SK-N-SH (cell line): ENCODE measurements at regions of chr12 and their contacts with region 1.

Region 1: GRCh38 chr12:43444940-43445564 is 107.0 kb downstream of the ADAMTS20 start:
- DNase-seq: peak; percentile 10
- H3K4me3 ChIP-seq: no peak overlapping the region
- H3K27ac ChIP-seq: no peak overlapping the region
- H3K4me1 ChIP-seq: no peaks in the 10 kb centered on the region; a peak in 1 of 4 replicates
- H3K27me3 ChIP-seq: no peaks in the 10 kb centered on the region
- CTCF ChIP-seq: peak; percentile 88
- EP300 ChIP-seq: no peak
- RAD21 ChIP-seq: peak; percentile 61

Region 2: DNA sequence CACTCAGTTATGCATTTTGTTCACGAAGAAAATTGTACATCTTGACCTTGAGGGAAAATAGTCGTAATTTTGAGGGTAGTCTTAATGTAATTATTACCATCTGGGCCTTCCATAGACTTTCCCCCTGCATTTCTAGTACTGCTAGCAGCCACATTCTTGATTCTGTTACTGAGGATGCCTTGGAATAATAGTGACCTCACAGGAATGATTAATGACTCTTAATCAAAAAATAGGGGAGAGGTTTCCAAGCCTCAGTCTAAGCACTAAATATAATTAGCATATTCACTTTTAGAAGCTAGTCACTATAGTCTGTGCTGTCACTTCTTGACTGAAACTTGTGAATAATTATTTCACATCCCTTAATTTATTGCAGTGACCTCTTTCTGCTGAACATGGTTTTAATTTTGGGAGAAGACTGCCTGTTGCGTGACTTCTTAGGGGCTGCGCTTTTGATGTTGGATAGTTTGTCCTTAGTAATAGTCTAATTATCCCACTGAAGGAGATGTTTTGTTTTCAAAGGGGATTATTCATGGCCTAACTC is 293.5 kb before region 1 on chr12:
- CTCF ChIA-PET with region 1: no interaction called
- POLR2A ChIA-PET with region 1: no interaction called
- DNase-seq: no peak
- H3K4me3 ChIP-seq: no peak overlapping the region
- H3K27ac ChIP-seq: no peak overlapping the region
- H3K4me1 ChIP-seq: peaks cover 0 to 2% of the 10 kb centered on the region in 2 experiments; a peak in 1 of 4 replicates
- H3K27me3 ChIP-seq: no peaks in the 10 kb centered on the region
- CTCF ChIP-seq: no peak
- EP300 ChIP-seq: no peak
- RAD21 ChIP-seq: no peak

Region 3: DNA sequence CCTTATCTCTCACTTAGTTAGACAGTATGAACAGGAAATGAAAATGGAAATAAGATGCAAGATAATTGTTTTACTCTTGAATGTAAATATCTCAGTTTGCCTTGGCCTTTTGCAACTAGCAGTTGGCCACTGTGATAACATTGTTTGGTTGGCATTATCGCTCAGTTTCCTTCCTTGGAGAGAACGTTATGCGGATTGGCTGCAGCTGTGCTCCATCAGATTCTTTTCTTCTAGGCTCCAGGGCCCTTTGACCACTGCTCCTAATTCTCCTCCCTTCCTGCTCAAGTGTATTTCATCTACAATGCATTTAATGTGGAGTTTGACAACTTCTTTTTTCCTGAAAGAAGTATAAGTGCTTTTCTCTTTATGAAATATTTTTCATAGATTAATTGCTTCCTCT is 177.2 kb before region 1 on chr12:
- CTCF ChIA-PET with region 1: no interaction called
- POLR2A ChIA-PET with region 1: no interaction called
- DNase-seq: no peak
- H3K4me3 ChIP-seq: no peak overlapping the region
- H3K27ac ChIP-seq: no peak overlapping the region
- H3K4me1 ChIP-seq: no peaks in the 10 kb centered on the region
- H3K27me3 ChIP-seq: no peaks in the 10 kb centered on the region
- CTCF ChIP-seq: no peak
- EP300 ChIP-seq: no peak
- RAD21 ChIP-seq: no peak

Region 4: DNA sequence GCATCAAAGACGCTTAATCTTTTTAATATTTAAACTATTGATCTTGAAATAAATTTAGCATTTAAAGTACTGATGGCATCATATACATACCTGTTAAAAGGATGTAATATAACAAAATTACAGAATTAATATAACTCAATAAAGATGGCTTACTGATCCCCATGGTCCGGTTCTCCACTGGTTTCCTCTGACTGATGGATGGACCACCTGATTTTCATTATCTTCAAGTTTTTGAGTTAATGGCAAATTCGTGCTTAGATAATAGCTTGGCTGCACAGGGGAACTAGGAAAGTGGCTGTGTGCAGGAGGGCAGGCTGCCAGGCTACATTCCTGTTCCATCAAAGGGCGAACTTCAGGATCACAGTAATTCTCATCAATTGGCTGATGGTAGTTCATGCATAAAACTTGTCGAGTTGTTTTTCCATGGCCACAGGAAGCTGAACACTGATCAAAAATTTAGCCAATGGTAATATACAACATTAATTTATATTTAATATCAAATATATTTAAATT is 16.9 kb before region 1 on chr12:
- CTCF ChIA-PET with region 1: interaction called, 39 read pairs
- POLR2A ChIA-PET with region 1: no interaction called
- DNase-seq: peak; percentile 10
- H3K4me3 ChIP-seq: no peak overlapping the region
- H3K27ac ChIP-seq: no peak overlapping the region
- H3K4me1 ChIP-seq: peaks cover 0 to 5% of the 10 kb centered on the region in 2 experiments; a peak in 2 of 4 replicates
- H3K27me3 ChIP-seq: no peaks in the 10 kb centered on the region
- CTCF ChIP-seq: no peak
- EP300 ChIP-seq: no peak
- RAD21 ChIP-seq: no peak

Region 5: GRCh38 chr12:43434614-43435013 is 10.4 kb before region 1 on chr12:
- CTCF ChIA-PET with region 1: interaction called, 39 read pairs
- POLR2A ChIA-PET with region 1: no interaction called
- DNase-seq: no peak
- H3K4me3 ChIP-seq: no peak overlapping the region
- H3K27ac ChIP-seq: no peak overlapping the region
- H3K4me1 ChIP-seq: no peaks in the 10 kb centered on the region
- H3K27me3 ChIP-seq: no peaks in the 10 kb centered on the region
- CTCF ChIP-seq: no peak
- EP300 ChIP-seq: no peak
- RAD21 ChIP-seq: no peak

Region 6: GRCh38 chr12:43462080-43462479 is 17.0 kb after region 1 on chr12:
- CTCF ChIA-PET with region 1: interaction called, 34 read pairs
- POLR2A ChIA-PET with region 1: no interaction called
- DNase-seq: no peak
- H3K4me3 ChIP-seq: no peak overlapping the region
- H3K27ac ChIP-seq: no peak overlapping the region
- H3K4me1 ChIP-seq: no peaks in the 10 kb centered on the region
- H3K27me3 ChIP-seq: no peaks in the 10 kb centered on the region
- CTCF ChIP-seq: no peak
- EP300 ChIP-seq: no peak
- RAD21 ChIP-seq: no peak